Activated T-helper 1 cell treated with anti-CD3 and anti-CD28 coated beads, Interleukin-12 subunit alpha, Interleukin-12 subunit beta, Interleukin-2, Interleukin-4 antibody, amounts not matched to agents 30 ng/mL and 10 ng/mL and 1 ng/mL, durations not matched to agents 14 hours and 24 hours and 36 hours (primary cell): ENCODE measurements at regions of chr11 and their contacts with region 1.

Region 1: GRCh38 chr11:14826600-14826999 is 65.4 kb downstream of the CYP2R1 start:
- DNase-seq: no peak
- H3K4me3 Mint-ChIP-seq: no peak overlapping the region
- H3K27ac Mint-ChIP-seq: peak overlapping the region; percentile 24
- H3K4me1 Mint-ChIP-seq: peaks cover 12% of the 10 kb centered on the region
- H3K27me3 Mint-ChIP-seq: no peaks in the 10 kb centered on the region

Region 2: GRCh38 chr11:14784230-14784629 is 42.4 kb before region 1 on chr11:
- intact Hi-C with region 1: loop called (anchors 5 kb)
- DNase-seq: no peak
- H3K4me3 Mint-ChIP-seq: no peak overlapping the region
- H3K27ac Mint-ChIP-seq: peak overlapping the region; percentile 85
- H3K4me1 Mint-ChIP-seq: peaks cover 55% of the 10 kb centered on the region
- H3K27me3 Mint-ChIP-seq: no peaks in the 10 kb centered on the region